ENCODE measurements at regions of chr5 and their contacts with region 1.

Region 1: GRCh38 chr5:611721-612486 is at the start of gene CEP72:
- DNase-seq: peak; percentile 80 to 94
- H3K4me3 ChIP-seq: peak within 1 kb of the TSS; percentile 69 to 77
- H3K27ac ChIP-seq: peak within 1 kb of the TSS; percentile 14 to 32
- H3K4me1 ChIP-seq: peaks cover 0 to 25% (median 9%) of the 10 kb centered on the region in 4 donors
- H3K27me3 ChIP-seq: peaks cover 0 to 16% of the 10 kb centered on the region in 2 donors
- CTCF ChIP-seq: no peak

Region 2: GRCh38 chr5:485946-486491 is 125.9 kb before region 1 on chr5:
- intact Hi-C with region 1: loop called (anchors 10 kb)
- DNase-seq: no peak
- H3K4me3 ChIP-seq: no peak overlapping the region
- H3K27ac ChIP-seq: no peak overlapping the region
- H3K4me1 ChIP-seq: no peaks in the 10 kb centered on the region
- H3K27me3 ChIP-seq: peaks cover 0 to 75% of the 10 kb centered on the region in 2 donors
- CTCF ChIP-seq: no peak

Measured in tibial artery (tissue), 4 donors.